ENCODE measurements at regions of chr4 and their contacts with region 1.

Region 1: DNA sequence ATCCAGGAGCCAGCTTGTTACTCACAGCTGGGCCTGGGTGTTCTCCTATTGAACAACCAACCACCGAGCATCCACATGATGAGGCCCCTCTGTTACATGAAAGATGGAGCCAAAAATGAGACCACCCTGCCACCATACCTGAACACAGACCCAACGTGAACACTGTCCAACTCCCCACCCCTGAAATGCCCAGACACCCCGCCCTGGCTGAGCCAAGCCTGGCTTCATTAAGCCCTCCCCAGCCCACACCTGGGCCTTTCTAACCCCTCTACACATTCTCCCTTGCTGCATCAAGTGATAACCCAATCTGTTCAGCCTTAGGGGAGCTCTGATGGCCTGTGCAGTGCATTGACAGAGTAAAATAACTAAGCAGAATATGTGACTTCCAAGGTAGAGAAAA is 80.7 kb downstream of the EVC start:
- DNase-seq: no peak
- H3K4me3 ChIP-seq: no peak overlapping the region
- H3K27ac ChIP-seq: no peak overlapping the region
- H3K4me1 ChIP-seq: no peaks in the 10 kb centered on the region
- H3K27me3 ChIP-seq: no peaks in the 10 kb centered on the region
- CTCF ChIP-seq: no peak

Region 2: GRCh38 chr4:4995103-4995907 is 796.3 kb before region 1 on chr4:
- CTCF ChIA-PET with region 1: no interaction called
- dilution Hi-C with region 1: no loop called
- in situ Hi-C with region 1: no loop called
- intact Hi-C with region 1: loop called (anchors 1 kb)
- DNase-seq: peak; percentile 42
- H3K4me3 ChIP-seq: no peak overlapping the region
- H3K27ac ChIP-seq: no peak overlapping the region
- H3K4me1 ChIP-seq: no peaks in the 10 kb centered on the region
- H3K27me3 ChIP-seq: peaks cover 2% of the 10 kb centered on the region
- CTCF ChIP-seq: peak; percentile 89 to 95

Region 3: DNA sequence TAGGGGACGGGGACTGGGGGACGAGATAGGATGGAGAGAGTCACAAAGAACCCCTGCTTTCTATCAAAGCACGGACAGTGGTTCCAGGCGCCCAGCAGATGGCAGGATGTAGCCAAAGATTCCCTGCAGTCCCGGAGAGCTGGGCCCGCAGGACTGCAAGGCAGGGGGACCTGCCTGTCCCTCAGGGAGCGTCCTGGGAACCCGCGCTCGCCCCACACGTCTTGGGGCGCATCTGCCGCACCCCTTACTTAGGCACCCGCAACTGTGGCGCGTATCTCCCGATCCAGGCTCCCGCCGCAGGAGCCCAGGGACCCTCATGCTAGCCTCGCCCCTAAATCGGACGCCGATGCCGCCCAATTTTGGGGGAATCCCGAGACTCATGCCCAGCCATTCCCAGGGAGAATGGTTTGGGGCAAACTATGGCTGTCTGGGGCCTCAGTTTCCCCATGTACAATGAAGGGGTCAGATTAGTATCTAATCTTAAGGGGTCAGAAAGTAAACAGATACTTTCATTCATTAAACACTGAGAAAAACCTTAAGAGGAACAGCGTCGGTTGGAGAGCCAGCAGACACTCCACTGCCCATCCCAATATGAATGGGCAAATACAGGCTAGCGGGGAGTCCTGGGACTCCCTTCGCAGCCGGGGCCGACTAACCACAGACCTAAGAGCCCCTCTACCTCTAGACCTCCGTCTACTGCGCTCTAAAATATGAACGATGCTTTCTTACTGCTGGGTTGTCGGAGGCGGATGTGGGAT is 741.0 kb before region 1 on chr4:
- CTCF ChIA-PET with region 1: no interaction called
- dilution Hi-C with region 1: no loop called
- in situ Hi-C with region 1: loop called in 1 of 2 experiments (anchors 25 kb)
- intact Hi-C with region 1: loop called (anchors 1 kb)
- DNase-seq: peak; percentile 63
- H3K4me3 ChIP-seq: peak overlapping the region; percentile 46 to 59 (median 53)
- H3K27ac ChIP-seq: no peak overlapping the region
- H3K4me1 ChIP-seq: peaks cover 12% of the 10 kb centered on the region
- H3K27me3 ChIP-seq: no peaks in the 10 kb centered on the region
- CTCF ChIP-seq: peak; percentile 59 to 81

Region 4: DNA sequence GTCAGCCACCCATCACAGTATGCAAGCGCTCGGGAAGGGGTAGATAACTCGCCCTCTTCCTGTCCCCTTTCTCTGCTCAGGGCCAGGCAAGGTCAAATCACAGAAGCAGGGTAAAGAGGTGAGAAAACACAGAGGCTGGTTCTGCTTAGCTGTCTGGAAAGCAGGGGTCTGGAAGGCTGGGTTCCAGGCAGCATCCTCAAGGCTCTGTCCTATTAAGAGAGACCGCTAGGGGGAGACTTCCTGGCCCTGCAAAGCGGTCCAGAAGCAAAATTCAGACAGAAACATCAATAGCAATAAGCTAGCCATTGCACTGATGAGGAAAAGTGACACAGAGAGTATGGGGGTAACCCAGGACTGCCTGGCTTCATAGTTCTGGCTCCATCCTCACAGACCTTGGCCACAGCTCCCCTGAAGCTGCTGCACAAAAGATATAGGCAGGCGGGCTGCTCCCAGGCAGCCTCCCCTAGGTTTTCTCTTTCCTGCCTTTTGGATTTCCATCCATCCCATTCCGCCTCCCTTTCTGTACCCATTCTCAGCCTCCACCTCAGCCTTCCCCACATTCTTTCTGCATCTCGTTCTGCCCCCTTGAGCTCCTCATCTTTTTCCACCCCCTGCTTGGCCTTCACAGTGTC is 391.7 kb before region 1 on chr4:
- CTCF ChIA-PET with region 1: no interaction called
- dilution Hi-C with region 1: no loop called
- in situ Hi-C with region 1: loop called (anchors 25 kb)
- intact Hi-C with region 1: loop called (anchors 1 kb)
- DNase-seq: no peak
- H3K4me3 ChIP-seq: no peak overlapping the region
- H3K27ac ChIP-seq: no peak overlapping the region
- H3K4me1 ChIP-seq: no peaks in the 10 kb centered on the region
- H3K27me3 ChIP-seq: no peaks in the 10 kb centered on the region
- CTCF ChIP-seq: peak; percentile 72 to 86

Region 5: DNA sequence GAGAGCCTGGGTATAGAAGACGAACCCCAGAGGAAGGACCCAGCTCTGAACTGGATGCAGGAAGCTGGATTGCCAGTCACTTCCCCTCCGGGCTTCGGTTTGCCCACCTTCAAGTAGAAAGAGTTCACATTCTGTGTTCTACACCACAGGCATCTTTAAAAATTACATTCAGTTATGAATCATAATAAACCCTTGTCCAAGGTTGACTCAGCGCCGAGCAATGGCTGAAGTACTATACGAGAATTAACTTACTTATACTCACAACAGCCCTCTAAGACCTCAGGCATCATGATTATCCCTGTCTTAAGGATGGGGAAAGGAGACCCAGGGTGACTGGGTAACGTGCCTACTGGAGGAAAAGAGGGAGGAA is 155.8 kb before region 1 on chr4:
- CTCF ChIA-PET with region 1: no interaction called
- dilution Hi-C with region 1: no loop called
- in situ Hi-C with region 1: no loop called
- intact Hi-C with region 1: loop called (anchors 5 kb)
- DNase-seq: peak; percentile 87
- H3K4me3 ChIP-seq: no peak overlapping the region
- H3K27ac ChIP-seq: peak overlapping the region; percentile 79
- H3K4me1 ChIP-seq: peaks cover 50% of the 10 kb centered on the region
- H3K27me3 ChIP-seq: no peaks in the 10 kb centered on the region
- CTCF ChIP-seq: no peak

Region 6: GRCh38 chr4:5742968-5743670 is 48.5 kb before region 1 on chr4:
- CTCF ChIA-PET with region 1: no interaction called
- dilution Hi-C with region 1: no loop called
- in situ Hi-C with region 1: no loop called
- intact Hi-C with region 1: loop called (anchors 5 kb)
- DNase-seq: no peak
- H3K4me3 ChIP-seq: no peak overlapping the region
- H3K27ac ChIP-seq: no peak overlapping the region
- H3K4me1 ChIP-seq: peaks cover 15% of the 10 kb centered on the region
- H3K27me3 ChIP-seq: no peaks in the 10 kb centered on the region
- CTCF ChIP-seq: no peak

Region 7: GRCh38 chr4:5827108-5828004 is 35.7 kb after region 1 on chr4:
- CTCF ChIA-PET with region 1: no interaction called
- dilution Hi-C with region 1: no loop called
- in situ Hi-C with region 1: no loop called
- intact Hi-C with region 1: no loop called
- DNase-seq: no peak
- H3K4me3 ChIP-seq: no peak overlapping the region
- H3K27ac ChIP-seq: no peak overlapping the region
- H3K4me1 ChIP-seq: no peaks in the 10 kb centered on the region
- H3K27me3 ChIP-seq: no peaks in the 10 kb centered on the region
- CTCF ChIP-seq: no peak